Natural killer cell (primary cell): ENCODE measurements at regions of chr16 and their contacts with region 1.

Region 1: GRCh38 chr16:11128265-11129141 is 127.5 kb downstream of the SOCS1 start:
- DNase-seq: peak in 1 of 2 donors; percentile 23
- ATAC-seq: peak; percentile 62 to 69 (median 62)
- H3K4me3 ChIP-seq: no peak overlapping the region
- H3K4me3 Mint-ChIP-seq: no peak overlapping the region
- H3K27ac ChIP-seq: peak overlapping the region; percentile 30
- H3K27ac Mint-ChIP-seq: peak overlapping the region; percentile 61 to 88
- H3K4me1 ChIP-seq: peaks cover 14% of the 10 kb centered on the region
- H3K4me1 Mint-ChIP-seq: peaks cover 17 to 21% of the 10 kb centered on the region in 2 donors
- H3K27me3 ChIP-seq: no peaks in the 10 kb centered on the region
- H3K27me3 Mint-ChIP-seq: no peaks in the 10 kb centered on the region
- CTCF ChIP-seq: no peak

Region 2: DNA sequence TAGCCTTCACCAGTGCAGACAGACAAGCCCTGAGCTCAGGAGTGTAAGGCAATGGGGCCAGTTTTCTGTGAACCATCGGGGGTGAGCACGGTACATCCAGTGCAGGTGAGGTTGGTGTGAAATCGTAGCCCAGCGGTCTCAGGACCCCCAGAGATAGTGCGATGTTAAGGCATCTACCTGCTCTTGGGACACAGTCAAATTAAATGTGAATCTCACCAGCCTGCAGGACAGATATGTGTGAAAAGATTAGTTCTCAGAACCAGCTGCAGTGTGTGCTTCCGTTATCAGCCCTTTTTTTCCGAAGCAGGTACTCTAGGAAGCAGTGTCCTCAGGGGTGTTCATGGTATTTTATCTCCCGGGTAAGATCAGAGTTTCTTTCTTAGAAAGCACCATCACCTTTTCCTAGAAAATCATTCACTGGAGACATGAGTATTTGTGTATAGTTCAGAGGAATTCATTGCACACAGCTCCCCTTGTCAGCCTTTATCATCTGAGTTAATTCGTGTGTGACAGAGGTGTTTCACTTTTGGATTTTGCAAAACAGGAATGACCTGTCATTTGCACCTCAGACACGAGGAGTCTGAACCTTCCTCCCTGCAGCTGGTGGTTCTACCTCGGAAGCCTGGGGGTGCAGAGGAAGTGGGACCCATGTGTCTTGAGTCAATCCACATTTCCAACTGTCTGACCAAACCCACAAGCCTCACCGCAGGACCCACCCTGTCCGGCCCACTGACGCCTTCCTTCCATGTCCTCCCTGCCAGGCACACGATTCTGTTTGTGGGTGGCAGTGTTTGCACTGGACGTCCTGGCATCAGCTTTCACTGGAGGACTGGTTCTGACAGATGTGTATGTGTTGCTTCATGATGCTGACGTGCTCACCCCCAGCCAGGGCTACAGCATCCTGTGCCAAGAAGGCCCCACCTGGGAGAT is 76.4 kb before region 1 on chr16:
- intact Hi-C with region 1: loop called (anchors 10 kb)
- DNase-seq: peak; percentile 26 to 43
- ATAC-seq: peak; percentile 79 to 80 (median 80)
- H3K4me3 ChIP-seq: no peak overlapping the region
- H3K4me3 Mint-ChIP-seq: peak overlapping the region; percentile 69
- H3K27ac ChIP-seq: peak overlapping the region; percentile 52
- H3K27ac Mint-ChIP-seq: peak overlapping the region; percentile 66 to 84
- H3K4me1 ChIP-seq: peaks cover 47% of the 10 kb centered on the region
- H3K4me1 Mint-ChIP-seq: peaks cover 49 to 52% of the 10 kb centered on the region in 2 donors
- H3K27me3 ChIP-seq: no peaks in the 10 kb centered on the region
- H3K27me3 Mint-ChIP-seq: no peaks in the 10 kb centered on the region
- CTCF ChIP-seq: no peak